HEK293 (cell line): ENCODE measurements at regions of chr11 and their contacts with region 1.

Region 1: DNA sequence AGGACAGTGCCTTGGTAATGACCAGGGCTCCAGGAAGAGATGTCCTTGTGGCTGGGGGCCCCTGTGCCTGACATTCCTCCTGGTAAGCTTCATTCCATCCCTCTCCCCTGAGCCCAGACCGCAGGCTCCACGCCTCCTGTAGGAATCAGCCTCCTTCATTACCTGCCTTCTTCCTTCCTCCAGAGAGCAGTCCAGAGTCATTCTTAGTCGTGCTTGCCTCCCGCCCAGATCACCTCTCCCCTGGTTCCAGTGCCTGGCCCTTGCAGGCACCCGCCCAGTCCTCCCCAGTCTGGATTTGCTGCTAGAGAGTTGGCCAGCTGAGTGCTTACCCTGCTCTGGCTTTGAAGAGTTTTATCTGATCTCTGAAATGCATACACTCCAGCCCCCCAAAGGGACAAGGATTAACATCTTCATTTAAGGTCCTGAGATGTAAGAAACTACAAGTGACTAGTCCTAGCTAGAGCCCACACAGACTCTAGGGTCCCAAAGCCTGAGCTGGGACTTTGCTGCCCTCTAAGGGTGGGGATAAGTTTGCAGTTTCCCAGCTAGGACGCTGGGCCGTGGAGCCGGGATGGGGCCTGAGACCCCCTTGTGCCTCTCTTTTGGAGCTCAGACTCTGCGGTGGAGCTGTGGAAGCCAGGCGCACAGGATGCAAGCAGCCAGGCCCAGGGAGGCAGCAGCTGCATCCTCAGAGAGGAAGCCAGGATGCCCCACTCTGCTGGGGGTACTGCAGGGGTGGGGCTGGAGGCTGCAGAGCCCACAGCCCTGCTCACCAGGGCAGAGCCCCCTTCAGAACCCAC is 1.6 kb downstream of the NR1H3 start:
- H3K4me3 ChIP-seq: no peak overlapping the region
- H3K27ac ChIP-seq: no peak overlapping the region
- H3K4me1 ChIP-seq: 0 out of 2 replicates have a peak, but pooled peaks cover 4% of the 10 kb centered on the region
- CTCF ChIP-seq: no peak

Region 2: GRCh38 chr11:47176328-47177228 is 82.8 kb before region 1 on chr11 and contains the start of gene ARFGAP2:
- CTCF ChIA-PET with region 1: interaction called, 25 read pairs
- POLR2A ChIA-PET with region 1: no interaction called
- H3K4me3 ChIP-seq: peak within 1 kb of the TSS; percentile 97
- H3K27ac ChIP-seq: peak within 1 kb of the TSS; percentile 70
- H3K4me1 ChIP-seq: no peaks in the 10 kb centered on the region
- CTCF ChIP-seq: no peak; the same call in 1 of the 2 replicates

Region 3: GRCh38 chr11:47241841-47242301 is 17.5 kb before region 1 on chr11:
- CTCF ChIA-PET with region 1: interaction called, 40 read pairs
- POLR2A ChIA-PET with region 1: interaction called, 12 read pairs
- H3K4me3 ChIP-seq: no peak overlapping the region
- H3K27ac ChIP-seq: 0 out of 2 replicates have a peak overlapping the region, but pooled peaks have one; percentile 16
- H3K4me1 ChIP-seq: no peaks in the 10 kb centered on the region
- CTCF ChIP-seq: no peak

Region 4: GRCh38 chr11:47248664-47249377 is 10.6 kb before region 1 on chr11 and contains the start of gene ACP2:
- CTCF ChIA-PET with region 1: interaction called, 40 read pairs
- POLR2A ChIA-PET with region 1: interaction called, 12 read pairs
- H3K4me3 ChIP-seq: peak within 1 kb of the TSS; percentile 72
- H3K27ac ChIP-seq: peak within 1 kb of the TSS; percentile 50
- H3K4me1 ChIP-seq: no peaks in the 10 kb centered on the region
- CTCF ChIP-seq: peak; percentile 65

Region 5: DNA sequence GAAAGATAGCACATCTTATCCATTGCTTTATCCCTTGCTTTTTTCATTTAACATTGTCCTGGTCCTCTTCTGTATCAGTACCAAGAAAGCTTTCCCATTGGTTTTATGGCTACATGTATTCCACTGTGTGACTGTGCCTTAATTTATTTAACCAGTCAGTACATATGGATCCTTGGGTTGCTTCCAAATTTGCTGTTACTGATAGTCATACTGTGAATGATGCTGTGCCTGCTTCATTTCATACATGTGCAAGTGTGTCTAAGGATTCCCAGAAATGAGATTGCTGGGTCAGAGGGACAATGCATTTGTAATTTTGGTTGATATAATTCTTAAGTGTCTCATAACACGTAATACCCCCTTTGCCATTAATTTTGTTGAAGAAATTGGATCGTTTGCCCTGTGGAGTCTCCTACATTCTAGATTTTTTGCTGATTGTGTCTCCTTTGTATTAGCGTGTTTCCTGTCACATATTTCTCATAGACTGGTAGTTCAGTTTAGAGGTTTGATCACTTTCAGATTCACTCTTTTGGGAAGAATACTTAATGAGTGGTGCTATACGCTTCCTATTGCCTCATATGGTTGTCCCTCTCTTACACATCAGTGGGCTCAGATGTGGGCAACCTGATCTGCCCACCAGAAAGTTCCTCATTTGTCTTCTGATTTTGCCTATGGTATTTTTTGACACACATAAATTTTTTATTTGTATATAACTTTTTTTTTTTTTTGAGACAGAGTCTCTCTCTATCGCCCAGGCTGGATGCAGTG is 57.9 kb after region 1 on chr11:
- CTCF ChIA-PET with region 1: interaction called, 11 read pairs
- POLR2A ChIA-PET with region 1: no interaction called
- H3K4me3 ChIP-seq: no peak overlapping the region
- H3K27ac ChIP-seq: no peak overlapping the region
- H3K4me1 ChIP-seq: no peaks in the 10 kb centered on the region
- CTCF ChIP-seq: no peak

Region 6: DNA sequence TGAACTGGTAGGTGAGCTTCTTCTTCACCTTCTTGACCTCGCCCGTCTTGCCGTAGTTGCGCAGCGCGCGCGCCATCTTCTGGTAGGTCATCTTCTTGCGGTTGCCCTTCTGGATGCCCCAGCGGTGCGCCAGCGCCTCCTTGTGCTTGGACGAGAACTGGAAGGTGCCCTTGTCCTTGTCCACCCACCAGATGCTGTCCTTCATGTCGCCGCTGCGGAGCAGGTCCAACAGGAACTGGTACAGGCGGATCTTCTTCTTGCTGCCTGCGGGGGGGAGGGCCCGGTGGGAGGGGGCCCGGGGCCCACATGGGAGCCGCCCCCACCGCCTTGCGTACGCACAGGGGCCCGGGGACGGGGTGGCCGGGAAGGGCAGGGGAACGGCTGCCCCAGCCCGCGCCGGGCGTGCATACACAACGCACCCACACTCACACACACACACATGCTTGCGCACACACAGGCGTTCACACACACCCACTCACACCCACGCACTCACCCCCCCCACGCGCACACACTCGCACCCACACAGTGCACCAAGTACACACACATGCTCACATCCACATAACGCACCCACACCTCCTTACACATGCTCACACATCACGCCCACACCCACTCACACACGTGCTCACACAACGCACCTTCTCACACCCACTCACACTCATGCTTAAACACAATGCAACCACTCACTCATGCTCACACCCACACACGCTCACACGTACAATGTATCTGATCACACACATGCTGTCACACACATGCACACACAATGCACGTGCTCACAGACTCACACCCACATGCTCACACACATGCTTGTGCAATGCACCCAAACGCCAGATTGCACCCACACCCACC is 96.1 kb after region 1 on chr11:
- CTCF ChIA-PET with region 1: interaction called, 32 read pairs
- POLR2A ChIA-PET with region 1: interaction called, 3 read pairs
- H3K4me3 ChIP-seq: peak overlapping the region; percentile 18
- H3K27ac ChIP-seq: no peak overlapping the region
- H3K4me1 ChIP-seq: no peaks in the 10 kb centered on the region
- CTCF ChIP-seq: peak; percentile 98